Activated CD8-positive, alpha-beta T cell treated with anti-CD3 and anti-CD28 coated beads, Interleukin-2, amount 10 ng/mL, durations not matched to agents 7 days and 5 days (primary cell): ENCODE measurements at regions of chr4 and their contacts with region 1.

Region 1: DNA sequence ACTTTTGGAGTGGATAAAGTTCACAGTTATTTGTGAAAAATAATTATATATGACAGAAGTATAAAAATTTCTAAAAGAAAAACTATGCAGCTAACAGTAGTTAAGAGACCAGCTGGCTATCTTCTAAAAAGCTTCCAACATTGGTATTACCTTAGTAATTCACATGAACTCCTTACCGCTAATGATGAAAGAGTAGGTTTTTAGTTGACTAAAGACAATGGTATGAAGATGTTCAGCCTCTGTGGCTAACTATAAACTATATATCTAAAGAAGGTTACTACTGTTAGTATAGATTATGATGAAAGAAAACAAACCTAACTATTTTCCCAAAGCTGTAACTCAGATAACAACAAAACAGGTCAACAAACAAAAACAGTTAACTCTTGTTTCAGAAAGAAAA is 10.4 kb downstream of the CCNI start:
- DNase-seq: no peak
- ATAC-seq: no peak
- H3K4me3 Mint-ChIP-seq: no peak overlapping the region
- H3K27ac Mint-ChIP-seq: peak overlapping the region; percentile 15
- H3K4me1 Mint-ChIP-seq: peaks cover 23% of the 10 kb centered on the region
- H3K27me3 Mint-ChIP-seq: no peaks in the 10 kb centered on the region

Region 2: DNA sequence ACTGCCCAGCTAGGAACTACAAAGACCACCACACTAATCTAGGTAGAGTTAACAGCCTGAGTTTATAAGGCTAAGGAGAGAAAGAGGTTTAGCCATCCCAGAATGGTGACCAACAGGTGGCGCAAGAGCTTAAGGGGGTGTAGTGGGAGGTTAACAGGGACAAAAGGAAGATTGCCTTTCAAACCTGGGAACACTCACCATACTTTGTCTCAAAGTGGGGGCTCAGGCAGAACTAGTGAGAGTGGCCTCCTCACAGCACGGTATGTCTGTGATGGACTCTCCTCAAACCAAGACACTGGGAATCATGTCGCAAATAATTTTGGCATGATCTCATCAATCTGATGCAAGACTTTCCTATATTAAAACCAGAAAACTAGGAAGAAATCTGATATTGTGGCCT is 13.0 kb before region 1 on chr4:
- CTCF ChIA-PET with region 1: interaction called, 17 read pairs
- POLR2A ChIA-PET with region 1: no interaction called
- DNase-seq: peak; percentile 72
- ATAC-seq: peak; percentile 60
- H3K4me3 Mint-ChIP-seq: no peak overlapping the region
- H3K27ac Mint-ChIP-seq: no peak overlapping the region
- H3K4me1 Mint-ChIP-seq: no peaks in the 10 kb centered on the region
- H3K27me3 Mint-ChIP-seq: no peaks in the 10 kb centered on the region